ENCODE measurements at regions of chr17 and their contacts with region 1.

Region 1: DNA sequence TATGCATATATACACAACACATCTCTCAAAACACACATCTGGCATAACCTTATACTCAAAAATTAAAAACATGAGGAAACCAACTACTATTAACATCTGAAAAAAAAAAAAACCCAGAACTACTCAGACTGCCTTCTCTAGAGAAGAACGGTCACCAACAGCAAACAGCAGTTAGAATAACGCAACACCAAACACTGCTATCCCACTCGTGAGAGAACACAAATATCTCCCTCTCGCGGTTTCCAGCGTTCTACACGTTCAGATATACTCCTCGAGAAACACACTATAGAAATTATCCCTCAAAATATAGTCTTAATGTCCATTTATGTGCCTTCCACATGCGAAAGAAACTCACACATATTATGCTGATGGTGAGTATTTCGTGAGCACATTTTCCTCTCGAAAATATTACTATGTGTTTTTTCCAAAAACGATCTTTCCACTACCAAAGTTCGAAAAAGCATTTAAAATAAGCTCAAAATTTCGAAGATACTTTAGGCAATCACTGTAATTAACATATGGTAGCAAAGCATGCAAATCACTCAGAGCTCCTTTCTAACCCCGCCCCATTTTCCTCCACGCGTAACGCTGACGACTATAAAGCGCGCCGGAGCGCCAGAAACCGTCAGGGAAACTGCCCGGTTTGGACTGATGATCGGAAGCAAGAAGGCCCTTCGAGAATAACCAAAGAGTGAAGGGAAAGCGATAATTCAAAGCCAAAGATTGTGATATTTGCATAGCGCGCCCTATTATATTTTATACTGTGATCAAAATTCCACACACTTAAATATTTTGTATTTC is 60.1 kb downstream of the TEX14 start:
- DNase-seq: peak; percentile 85 to 98
- ATAC-seq: peak; percentile 98 to 99
- H3K4me3 ChIP-seq: peak overlapping the region; percentile 40
- H3K27ac ChIP-seq: peak overlapping the region; percentile 83 to 89
- H3K4me1 ChIP-seq: peaks cover 9% of the 10 kb centered on the region
- CTCF ChIP-seq: peak; percentile 40; the same call in 2 of the 3 replicates
- EP300 ChIP-seq: no peak
- POLR2A ChIP-seq: peak; percentile 100
- RAD21 ChIP-seq: peak; percentile 40 to 50; a peak in 4 of 5 replicates

Region 2: GRCh38 chr17:57879463-57880433 is 752.0 kb before region 1 on chr17:
- CTCF ChIA-PET with region 1: no interaction called
- POLR2A ChIA-PET with region 1: no interaction called
- DNase-seq: peak; percentile 82 to 91
- ATAC-seq: peak; percentile 60 to 64
- H3K4me3 ChIP-seq: peak overlapping the region; percentile 1; the same call in 1 of the 3 replicates
- H3K27ac ChIP-seq: peak overlapping the region; percentile 92 to 95
- H3K4me1 ChIP-seq: peaks cover 88% of the 10 kb centered on the region
- CTCF ChIP-seq: no peak
- EP300 ChIP-seq: peak in 1 of 2 experiments; percentile 56; a peak in 2 of 5 replicates
- POLR2A ChIP-seq: no peak
- RAD21 ChIP-seq: peak in 1 of 2 experiments; percentile 4; a peak in 1 of 5 replicates

Region 3: DNA sequence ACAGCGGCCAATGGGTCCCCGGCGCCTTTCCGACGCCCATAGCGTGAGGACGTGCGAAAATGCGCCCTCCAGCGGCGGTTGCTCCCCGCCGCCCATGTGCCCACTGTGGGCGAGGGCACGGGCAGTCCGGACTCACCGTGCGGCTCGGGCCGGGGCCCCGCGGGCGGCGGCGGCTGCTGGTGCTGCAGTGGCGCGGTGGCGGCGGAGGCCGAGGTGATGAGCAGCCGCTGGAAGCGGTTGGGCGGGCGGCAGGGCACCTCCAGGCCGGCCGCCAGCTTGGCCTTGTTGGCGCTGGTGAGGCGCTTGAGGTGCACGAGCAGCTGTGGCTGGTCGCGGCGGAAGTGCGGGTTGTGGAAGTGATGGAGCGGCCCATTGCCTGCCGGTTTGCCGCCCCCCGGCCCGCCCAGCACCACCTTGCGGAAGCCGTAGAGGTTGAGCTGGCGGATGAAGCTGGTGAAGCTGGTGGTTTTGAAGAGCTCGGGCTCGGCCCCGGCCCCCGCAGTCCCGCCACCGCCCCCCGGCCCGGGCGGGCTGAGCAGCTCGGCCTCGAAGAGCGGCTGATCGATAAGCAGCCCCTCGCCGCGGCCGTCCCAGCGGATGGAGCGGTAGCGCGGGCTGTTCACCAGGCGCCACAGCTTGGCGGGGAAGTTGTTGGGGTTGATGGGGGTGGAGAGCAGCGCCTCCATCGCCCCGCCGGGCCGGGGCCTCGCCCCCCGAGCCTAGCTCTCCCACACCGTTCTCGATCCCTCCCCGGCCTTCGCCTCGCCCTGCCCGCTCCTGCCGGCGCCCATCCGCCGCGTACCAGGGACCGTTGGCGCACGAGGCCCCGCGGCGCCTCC is 143.9 kb before region 1 on chr17 and contains the start of gene HSF5:
- CTCF ChIA-PET with region 1: no interaction called
- POLR2A ChIA-PET with region 1: no interaction called
- DNase-seq: no peak
- ATAC-seq: no peak
- H3K4me3 ChIP-seq: no peak within 1 kb of the TSS
- H3K27ac ChIP-seq: no peak within 1 kb of the TSS
- H3K4me1 ChIP-seq: no peaks in the 10 kb centered on the region
- CTCF ChIP-seq: no peak
- EP300 ChIP-seq: no peak
- POLR2A ChIP-seq: no peak
- RAD21 ChIP-seq: no peak
- polyA plus RNA-seq, gene HSF5: not detected in 2 replicates

Region 4: GRCh38 chr17:58525181-58525601 is 106.5 kb before region 1 on chr17:
- CTCF ChIA-PET with region 1: interaction called, 45 read pairs
- POLR2A ChIA-PET with region 1: interaction called, 14 read pairs
- DNase-seq: no peak
- ATAC-seq: no peak
- H3K4me3 ChIP-seq: no peak overlapping the region
- H3K27ac ChIP-seq: peak overlapping the region; percentile 19 to 26; a peak in 3 of 6 replicates
- H3K4me1 ChIP-seq: peaks cover 5% of the 10 kb centered on the region; the same call in 1 of the 3 replicates
- CTCF ChIP-seq: no peak
- EP300 ChIP-seq: no peak
- POLR2A ChIP-seq: no peak
- RAD21 ChIP-seq: no peak

Region 5: DNA sequence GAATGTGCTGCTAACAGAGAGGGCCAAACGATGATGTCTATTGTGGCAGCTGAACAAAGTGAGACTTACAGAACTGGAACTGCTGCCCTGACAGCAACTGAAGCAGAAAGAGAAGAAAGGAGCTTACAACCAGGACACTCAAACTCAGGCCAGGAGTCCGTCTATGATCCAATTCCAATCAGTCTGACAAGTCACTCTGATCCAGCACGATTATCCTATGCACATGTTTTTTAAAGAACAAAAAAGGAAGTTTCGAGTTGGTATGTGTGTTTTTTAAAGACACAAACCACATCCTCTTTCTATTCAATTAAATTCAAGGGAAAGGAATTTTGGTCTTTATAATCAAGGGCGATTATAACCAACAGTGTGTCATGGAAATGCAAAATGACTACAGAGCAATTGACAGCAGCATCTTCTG is 74.9 kb before region 1 on chr17:
- CTCF ChIA-PET with region 1: no interaction called
- POLR2A ChIA-PET with region 1: no interaction called
- DNase-seq: no peak
- ATAC-seq: no peak
- H3K4me3 ChIP-seq: no peak overlapping the region
- H3K27ac ChIP-seq: no peak overlapping the region
- H3K4me1 ChIP-seq: no peaks in the 10 kb centered on the region
- CTCF ChIP-seq: no peak
- EP300 ChIP-seq: no peak
- POLR2A ChIP-seq: no peak
- RAD21 ChIP-seq: no peak

Region 6: DNA sequence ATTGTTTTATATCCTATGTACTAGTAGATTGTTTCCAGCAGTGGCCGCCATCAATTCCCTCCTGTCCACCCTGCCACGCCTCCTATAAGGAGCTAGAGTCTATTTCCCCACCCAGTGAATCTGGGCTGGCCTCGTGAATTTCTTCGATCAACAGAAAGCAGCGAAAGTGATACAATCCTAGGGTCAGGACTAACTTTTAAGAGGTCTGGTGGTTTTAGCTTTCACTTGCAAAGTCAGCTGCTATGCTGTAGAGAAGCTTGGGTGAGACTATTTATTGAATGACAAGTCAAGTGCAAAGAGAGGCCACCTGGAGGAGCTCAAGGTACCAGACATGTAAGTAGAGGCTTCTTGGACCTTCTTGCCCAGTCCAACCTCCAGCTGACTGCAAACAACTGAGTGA is 36.4 kb before region 1 on chr17:
- CTCF ChIA-PET with region 1: interaction called, 4 read pairs
- POLR2A ChIA-PET with region 1: interaction called, 21 read pairs
- DNase-seq: peak in 1 of 2 experiments; percentile 60
- ATAC-seq: peak; percentile 65 to 76
- H3K4me3 ChIP-seq: no peak overlapping the region
- H3K27ac ChIP-seq: no peak overlapping the region
- H3K4me1 ChIP-seq: no peaks in the 10 kb centered on the region
- CTCF ChIP-seq: no peak
- EP300 ChIP-seq: no peak
- POLR2A ChIP-seq: no peak
- RAD21 ChIP-seq: peak in 1 of 2 experiments; percentile 30; a peak in 2 of 5 replicates

Region 7: DNA sequence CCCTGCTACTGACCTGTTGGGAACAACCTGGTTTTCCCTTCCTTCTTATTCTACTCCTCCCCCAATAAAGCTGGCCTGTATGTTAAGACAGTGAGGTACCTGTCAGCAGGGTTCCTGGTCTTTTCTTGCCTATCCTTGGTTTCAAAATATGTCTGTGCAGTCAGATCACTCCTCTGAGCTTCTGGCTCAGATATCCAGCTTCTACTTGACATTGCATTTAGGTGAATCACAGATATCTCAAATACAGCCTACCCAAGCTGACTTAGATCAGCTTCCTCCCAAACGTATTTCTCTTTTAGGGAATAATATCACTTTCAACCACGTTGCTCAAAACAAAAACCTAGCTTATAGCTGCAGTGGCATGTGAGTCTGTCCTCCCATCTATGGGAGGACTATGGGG is 11.4 kb after region 1 on chr17:
- CTCF ChIA-PET with region 1: interaction called, 4 read pairs
- POLR2A ChIA-PET with region 1: interaction called, 102 read pairs
- DNase-seq: peak; percentile 56 to 57
- ATAC-seq: peak; percentile 87 to 90
- H3K4me3 ChIP-seq: no peak overlapping the region
- H3K27ac ChIP-seq: peak overlapping the region; percentile 18 to 72; a peak in 3 of 6 replicates
- H3K4me1 ChIP-seq: peaks cover 20% of the 10 kb centered on the region
- CTCF ChIP-seq: no peak
- EP300 ChIP-seq: no peak
- POLR2A ChIP-seq: no peak
- RAD21 ChIP-seq: no peak

Region 8: DNA sequence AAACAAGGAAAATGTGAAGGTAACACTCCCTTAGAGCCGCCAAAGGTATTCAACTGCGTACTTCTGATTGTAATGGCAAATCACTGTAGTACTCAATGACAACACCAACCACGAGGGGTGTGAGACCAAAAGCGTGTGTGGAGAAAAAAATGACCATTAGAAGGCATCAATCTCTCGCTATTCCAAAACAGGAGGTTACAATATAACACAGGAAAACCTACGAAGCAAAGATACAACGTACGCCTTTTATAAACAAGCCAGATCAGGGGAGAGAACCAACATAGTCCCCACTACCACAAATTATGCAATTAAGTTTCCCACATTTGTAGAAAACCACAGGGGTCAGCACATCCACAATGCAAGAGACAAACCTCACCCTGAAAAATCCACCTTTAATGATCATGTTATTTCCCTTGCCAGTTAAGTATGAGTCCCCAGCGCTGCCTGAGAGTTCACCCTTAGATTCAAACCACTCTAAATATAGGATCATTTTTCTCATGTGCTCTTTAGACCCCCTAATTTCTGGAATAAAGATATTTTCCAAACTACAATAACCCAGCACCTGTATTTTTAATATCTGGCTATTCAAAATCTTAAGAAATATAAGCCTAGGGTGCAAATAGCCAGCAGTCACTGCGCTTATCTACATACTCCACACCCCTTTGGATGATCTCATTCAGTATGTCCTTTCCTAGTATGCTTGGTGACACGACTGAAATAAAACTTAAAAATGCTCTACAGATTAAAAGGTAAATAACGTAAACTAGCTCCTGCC is 47.7 kb after region 1 on chr17:
- CTCF ChIA-PET with region 1: no interaction called
- POLR2A ChIA-PET with region 1: interaction called, 14 read pairs
- DNase-seq: peak; percentile 71 to 86
- ATAC-seq: peak; percentile 86 to 89
- H3K4me3 ChIP-seq: no peak overlapping the region
- H3K27ac ChIP-seq: peak overlapping the region; percentile 29 to 36; a peak in 2 of 6 replicates
- H3K4me1 ChIP-seq: peaks cover 10% of the 10 kb centered on the region
- CTCF ChIP-seq: no peak
- EP300 ChIP-seq: no peak
- POLR2A ChIP-seq: peak; percentile 84
- RAD21 ChIP-seq: no peak

Region 9: DNA sequence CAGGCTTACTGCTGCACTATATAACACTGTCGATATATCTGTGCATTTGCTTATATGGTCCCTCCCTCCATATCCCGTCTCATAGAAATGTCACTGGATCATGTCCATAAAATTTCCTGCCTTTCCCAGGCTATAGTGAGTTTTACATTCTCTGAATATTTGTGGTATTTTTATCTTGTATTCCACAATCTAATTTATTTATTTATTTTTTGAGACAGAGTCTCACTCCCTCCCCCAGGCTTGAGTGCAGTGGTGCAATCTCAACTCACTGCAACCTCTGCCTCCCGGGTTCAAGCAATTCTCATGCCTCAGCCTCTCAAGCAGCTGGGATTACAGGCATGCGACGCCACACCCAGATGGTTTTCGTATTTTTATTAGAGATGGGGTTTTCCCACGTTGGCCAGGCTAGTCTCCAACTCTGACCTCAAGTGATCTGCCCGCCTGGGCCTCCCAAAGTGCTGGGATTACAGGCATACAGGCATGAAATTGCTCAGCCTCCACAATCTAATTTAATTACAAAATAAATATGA is 462.0 kb after region 1 on chr17:
- CTCF ChIA-PET with region 1: no interaction called
- POLR2A ChIA-PET with region 1: interaction called, 13 read pairs
- DNase-seq: peak; percentile 34 to 90
- ATAC-seq: peak; percentile 87 to 91
- H3K4me3 ChIP-seq: peak overlapping the region; percentile 9; the same call in 1 of the 3 replicates
- H3K27ac ChIP-seq: peak overlapping the region; percentile 30 to 75; a peak in 5 of 6 replicates
- H3K4me1 ChIP-seq: peaks cover 31% of the 10 kb centered on the region
- CTCF ChIP-seq: no peak
- EP300 ChIP-seq: peak; percentile 25 to 65; a peak in 3 of 5 replicates
- POLR2A ChIP-seq: no peak
- RAD21 ChIP-seq: no peak

Region 10: GRCh38 chr17:59296771-59297500 is 665.2 kb after region 1 on chr17:
- CTCF ChIA-PET with region 1: no interaction called
- POLR2A ChIA-PET with region 1: no interaction called
- DNase-seq: no peak
- ATAC-seq: no peak
- H3K4me3 ChIP-seq: no peak overlapping the region
- H3K27ac ChIP-seq: no peak overlapping the region
- H3K4me1 ChIP-seq: no peaks in the 10 kb centered on the region
- CTCF ChIP-seq: no peak
- EP300 ChIP-seq: no peak
- POLR2A ChIP-seq: no peak
- RAD21 ChIP-seq: no peak

Measured in A549 (cell line).